K562 (cell line): ENCODE measurements at regions of chr1 and their contacts with region 1.

Region 1: DNA sequence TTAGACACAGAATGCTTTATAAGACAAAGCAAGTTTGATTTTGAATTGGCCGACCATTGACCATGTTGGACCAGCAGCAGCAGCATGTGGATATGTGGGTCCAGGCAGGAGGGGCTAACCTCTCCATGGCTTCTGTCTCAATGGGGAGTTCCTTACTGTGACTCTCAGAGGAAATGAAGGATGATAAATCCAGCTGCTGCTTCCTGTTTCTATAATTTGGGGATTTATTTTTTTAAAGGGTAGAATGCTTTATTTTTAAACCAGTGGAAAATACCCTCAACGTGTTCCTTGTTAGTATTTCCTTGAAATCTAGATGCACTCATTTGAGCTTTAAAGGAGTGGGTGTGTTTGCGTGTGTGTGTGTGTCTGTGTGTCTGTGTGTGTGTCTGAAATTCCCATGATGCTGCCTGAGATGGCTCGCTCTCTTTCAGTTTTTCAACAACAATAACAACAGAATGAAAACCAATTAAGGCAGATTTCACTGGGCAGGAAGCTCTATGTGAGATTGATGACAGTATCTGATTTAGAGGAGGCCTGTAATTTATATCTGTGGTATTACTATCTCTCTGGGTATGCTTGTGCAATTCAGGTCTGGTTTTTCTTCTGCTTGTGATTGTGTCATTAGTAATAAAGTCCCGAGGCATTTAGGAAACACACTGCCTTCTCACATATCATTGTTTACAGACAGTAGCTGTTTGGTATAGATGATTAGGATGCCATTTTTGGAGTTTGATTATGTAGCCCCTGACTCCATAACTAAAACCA is 86.1 kb upstream of the ZNF326 start:
- DNase-seq: peak in 1 of 4 experiments; percentile 35
- ATAC-seq: no peak
- H3K4me3 ChIP-seq: no peak overlapping the region
- H3K27ac ChIP-seq: peak overlapping the region; percentile 85
- H3K4me1 ChIP-seq: peaks cover 30 to 87% of the 10 kb centered on the region in 2 experiments
- H3K27me3 ChIP-seq: no peaks in the 10 kb centered on the region
- CTCF ChIP-seq: no peak
- EP300 ChIP-seq: peak; percentile 28; the same call in 1 of the 2 replicates
- POLR2A ChIP-seq: no peak
- RAD21 ChIP-seq: no peak; a peak in 1 of 4 replicates

Region 2: GRCh38 chr1:89890085-89890752 is 18.6 kb before region 1 on chr1:
- CTCF ChIA-PET with region 1: no interaction called
- POLR2A ChIA-PET with region 1: no interaction called
- in situ Hi-C with region 1: no loop called
- intact Hi-C with region 1: loop called (anchors 2 kb)
- DNase-seq: peak in 2 of 4 experiments; percentile 57 to 78
- ATAC-seq: peak; percentile 55
- H3K4me3 ChIP-seq: no peak overlapping the region
- H3K27ac ChIP-seq: peak overlapping the region; percentile 74
- H3K4me1 ChIP-seq: peaks cover 16 to 89% of the 10 kb centered on the region in 2 experiments
- H3K27me3 ChIP-seq: no peaks in the 10 kb centered on the region
- CTCF ChIP-seq: no peak
- EP300 ChIP-seq: peak; percentile 30; the same call in 1 of the 2 replicates
- POLR2A ChIP-seq: no peak
- RAD21 ChIP-seq: no peak

Region 3: GRCh38 chr1:89929467-89930063 is 20.7 kb after region 1 on chr1:
- CTCF ChIA-PET with region 1: no interaction called
- POLR2A ChIA-PET with region 1: no interaction called
- in situ Hi-C with region 1: no loop called
- intact Hi-C with region 1: loop called (anchors 2 kb)
- DNase-seq: no peak
- ATAC-seq: peak; percentile 29
- H3K4me3 ChIP-seq: no peak overlapping the region
- H3K27ac ChIP-seq: no peak overlapping the region
- H3K4me1 ChIP-seq: peaks cover 3 to 19% of the 10 kb centered on the region in 2 experiments; a peak in 4 of 5 replicates
- H3K27me3 ChIP-seq: no peaks in the 10 kb centered on the region
- CTCF ChIP-seq: no peak
- EP300 ChIP-seq: no peak
- POLR2A ChIP-seq: no peak
- RAD21 ChIP-seq: no peak

Region 4: DNA sequence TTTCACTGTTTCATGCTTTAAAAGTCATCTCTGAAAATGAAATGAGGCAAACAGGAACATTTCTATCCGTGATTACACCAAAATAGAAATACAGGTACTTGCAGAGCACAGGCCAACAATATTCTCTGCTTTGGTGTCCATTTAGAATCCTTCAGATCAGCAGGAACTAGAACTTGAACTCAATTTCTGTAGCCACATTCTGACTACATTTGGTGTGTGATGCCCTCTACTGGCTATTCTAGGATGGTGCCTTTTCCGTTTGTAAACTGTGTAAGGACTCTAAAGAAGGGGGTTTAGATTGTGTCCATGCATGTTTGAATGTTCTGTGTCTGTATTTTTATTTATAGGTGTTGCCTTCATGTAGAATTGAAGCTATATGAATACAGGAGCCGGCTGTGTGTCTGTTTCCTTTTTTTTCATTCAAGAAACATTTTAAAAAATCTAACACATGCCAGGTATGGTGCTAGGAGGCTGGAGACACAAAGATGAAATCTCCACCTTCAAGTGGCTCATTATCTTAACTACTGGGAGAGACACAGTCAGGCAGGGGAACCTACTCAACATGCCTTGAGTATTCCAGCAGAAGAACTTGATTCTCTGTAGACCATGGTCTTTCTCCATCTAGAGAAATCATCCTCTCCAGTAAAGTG is 78.4 kb after region 1 on chr1:
- CTCF ChIA-PET with region 1: no interaction called
- POLR2A ChIA-PET with region 1: no interaction called
- in situ Hi-C with region 1: no loop called
- intact Hi-C with region 1: loop called (anchors 5 kb)
- DNase-seq: peak; percentile 46 to 82 (median 62)
- ATAC-seq: peak; percentile 91
- H3K4me3 ChIP-seq: no peak overlapping the region
- H3K27ac ChIP-seq: no peak overlapping the region
- H3K4me1 ChIP-seq: peaks cover 2 to 14% of the 10 kb centered on the region in 2 experiments; a peak in 4 of 5 replicates
- H3K27me3 ChIP-seq: no peaks in the 10 kb centered on the region
- CTCF ChIP-seq: peak; percentile 77 to 91 (median 88)
- EP300 ChIP-seq: 0 out of 2 replicates have a peak, but pooled peaks have one; percentile 17
- POLR2A ChIP-seq: no peak
- RAD21 ChIP-seq: peak; percentile 93 to 98